ENCODE measurements at regions of chr11 and their contacts with region 1.

Region 1: DNA sequence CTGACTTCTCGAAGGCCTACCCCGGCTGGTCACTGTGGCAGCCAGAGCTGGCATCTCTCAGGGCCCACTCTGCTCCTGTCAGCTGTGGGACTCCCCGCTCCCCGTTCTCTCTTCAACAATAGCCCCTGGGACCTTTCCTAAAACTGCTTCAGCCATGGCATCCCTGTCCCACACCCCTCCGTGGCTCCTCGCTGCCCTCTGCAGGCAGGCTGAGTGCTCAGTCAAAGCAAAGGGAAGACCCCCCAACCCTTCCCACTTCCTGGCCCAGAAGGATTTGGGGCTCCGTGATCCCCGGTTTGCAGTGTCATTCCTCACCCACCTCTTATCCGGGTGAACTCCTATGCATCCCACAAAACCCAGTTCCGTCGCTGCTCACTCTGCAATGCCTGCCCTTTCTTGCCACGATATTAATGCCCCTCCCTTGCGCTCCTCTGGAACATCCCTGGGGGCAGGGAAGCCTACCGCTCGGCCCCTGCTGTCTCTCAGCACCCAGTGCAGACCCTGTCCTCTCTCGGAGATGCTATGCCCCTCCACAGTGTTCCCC is 1.6 kb upstream of the TH start:
- DNase-seq: no peak

Region 2: GRCh38 chr11:1303126-1303821 is 869.9 kb before region 1 on chr11:
- intact Hi-C with region 1: loop called in 1 of 2 experiments (anchors 5 kb)
- DNase-seq: peak; percentile 81

Region 3: GRCh38 chr11:2196970-2197770 is 23.9 kb after region 1 on chr11:
- intact Hi-C with region 1: no loop called
- DNase-seq: peak; percentile 92

Measured in posterior vena cava (tissue), 2 donors.